Cardiac septum (tissue), 1 donor: ENCODE measurements at regions of chr11 and their contacts with region 1.

Region 1: DNA sequence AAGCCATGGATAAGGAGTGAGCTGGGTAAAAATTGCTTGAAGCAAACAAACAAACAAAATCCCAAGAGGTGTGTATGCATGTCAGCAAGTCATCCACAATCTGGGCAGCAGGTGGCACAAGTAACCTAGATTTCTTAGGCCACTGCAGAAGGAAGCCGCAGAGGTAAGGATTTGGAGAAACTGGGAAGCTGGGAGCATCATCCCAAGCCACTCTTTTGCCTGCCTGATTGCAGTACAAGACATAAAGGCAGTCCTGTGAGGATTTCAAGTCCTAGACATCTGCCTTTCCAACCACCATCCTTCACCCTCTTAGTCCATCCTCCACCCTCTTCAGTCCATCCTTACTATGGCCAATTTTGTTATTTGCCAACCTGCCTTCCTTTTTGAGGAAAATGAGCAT is 67.2 kb upstream of the BMAL1 start:
- DNase-seq: no peak

Region 2: GRCh38 chr11:12989428-12990161 is 220.8 kb before region 1 on chr11:
- intact Hi-C with region 1: no loop called
- DNase-seq: no peak

Region 3: DNA sequence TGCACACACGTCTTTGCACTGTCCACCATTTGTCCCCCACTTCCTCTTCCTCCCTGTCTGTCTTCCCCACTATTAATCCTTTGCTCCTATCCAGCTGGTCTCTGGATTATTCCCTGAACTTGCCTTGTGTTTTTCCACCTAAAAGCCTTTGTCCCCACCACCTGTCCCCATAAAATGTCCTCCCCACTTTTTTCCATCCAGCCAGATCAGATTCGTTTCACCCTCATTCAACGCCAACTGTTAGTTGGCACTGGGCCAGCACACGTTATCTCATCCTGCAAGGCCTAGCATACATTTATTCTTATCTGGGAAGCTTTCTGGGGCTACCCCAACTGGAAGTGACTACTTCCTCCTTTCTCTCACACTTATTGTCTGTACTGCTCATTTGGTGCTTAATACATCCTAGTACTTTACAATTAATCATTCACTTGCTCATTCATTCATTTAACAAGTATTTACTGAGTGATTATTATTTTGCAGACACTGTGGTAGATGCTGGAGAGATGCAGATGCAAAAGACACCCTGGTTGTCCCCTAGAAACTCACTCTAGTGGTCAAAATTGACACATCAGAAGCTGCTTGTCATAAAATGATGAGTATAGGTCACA is 105.1 kb before region 1 on chr11:
- intact Hi-C with region 1: no loop called
- DNase-seq: no peak

Region 4: GRCh38 chr11:13261591-13262061 is 51.2 kb after region 1 on chr11:
- intact Hi-C with region 1: loop called (anchors 5 kb)
- DNase-seq: no peak

Region 5: DNA sequence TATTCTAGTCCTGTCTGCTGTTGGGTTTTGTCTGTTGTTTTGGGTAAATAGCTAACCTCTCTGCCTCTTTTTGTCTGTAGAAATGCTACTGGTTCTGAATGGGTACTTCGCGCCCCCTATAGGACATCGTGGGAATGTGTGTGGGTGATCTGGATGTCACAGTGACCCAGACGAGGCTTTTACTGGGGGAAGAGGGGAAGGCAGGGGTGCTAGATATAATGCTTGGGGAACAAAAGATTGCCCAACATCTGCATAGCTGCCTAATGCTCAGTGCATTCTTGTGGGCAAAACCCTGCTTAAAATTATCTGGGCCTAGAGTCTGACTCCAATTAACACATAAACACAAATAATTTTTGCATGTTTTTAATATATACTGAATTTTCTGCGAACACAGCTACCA is 124.9 kb after region 1 on chr11:
- intact Hi-C with region 1: loop called (anchors 2 kb)
- DNase-seq: no peak

Region 6: DNA sequence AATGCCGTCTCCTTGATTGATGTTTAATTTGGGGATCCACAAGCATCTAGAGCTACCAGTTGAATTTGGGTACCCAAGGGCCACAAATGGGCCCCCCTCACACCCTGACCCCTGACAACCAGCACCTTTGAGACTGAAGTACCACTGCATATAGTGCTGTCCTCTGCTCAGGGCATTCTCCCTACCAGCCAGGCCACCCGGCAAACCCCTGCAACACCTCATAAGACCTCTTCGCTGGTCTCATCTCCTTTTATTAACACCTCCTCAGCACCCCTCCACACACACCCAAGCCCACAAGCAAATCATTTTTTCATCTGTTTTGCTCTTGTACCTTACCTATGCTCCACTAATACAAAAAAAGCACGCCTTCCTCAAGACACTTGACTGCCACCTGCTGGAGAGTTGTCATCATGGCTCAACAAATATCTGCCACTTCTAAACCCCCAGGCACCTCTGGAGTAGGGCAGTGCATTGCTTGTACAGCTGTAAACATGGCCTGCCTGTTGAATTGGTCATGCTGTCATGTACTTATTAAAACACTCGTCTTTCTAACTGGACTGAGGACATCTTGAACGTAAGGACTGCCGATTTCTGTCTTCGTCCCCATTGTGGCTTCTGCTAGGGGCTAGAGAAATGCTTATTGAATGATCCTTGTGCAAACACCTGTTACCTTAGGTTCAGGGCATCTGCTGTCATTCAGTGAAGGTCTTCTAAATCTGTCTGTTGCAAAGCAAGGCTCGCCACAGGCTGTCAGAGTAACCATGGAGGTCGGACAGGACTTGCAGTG is 133.7 kb after region 1 on chr11:
- intact Hi-C with region 1: loop called (anchors 2 kb)
- DNase-seq: no peak